Calu3 (cell line): ENCODE measurements at regions of chr14 and their contacts with region 1.

Region 1: GRCh38 chr14:69483765-69484443 is 624 bp upstream of the PLEKHD1 start:
- DNase-seq: peak; percentile 35
- H3K4me3 Mint-ChIP-seq: peak overlapping the region; percentile 72
- H3K27ac Mint-ChIP-seq: no peak overlapping the region
- H3K4me1 Mint-ChIP-seq: no peaks in the 10 kb centered on the region
- H3K27me3 Mint-ChIP-seq: peaks cover 65% of the 10 kb centered on the region
- CTCF ChIP-seq: no peak

Region 2: GRCh38 chr14:67987606-67988005 is 1496.3 kb before region 1 on chr14:
- CTCF ChIA-PET with region 1: interaction called, 12 read pairs
- intact Hi-C with region 1: no loop called
- DNase-seq: no peak
- H3K4me3 Mint-ChIP-seq: no peak overlapping the region
- H3K27ac Mint-ChIP-seq: no peak overlapping the region
- H3K4me1 Mint-ChIP-seq: no peaks in the 10 kb centered on the region
- H3K27me3 Mint-ChIP-seq: no peaks in the 10 kb centered on the region
- CTCF ChIP-seq: no peak

Region 3: GRCh38 chr14:69780952-69781351 is 297.0 kb after region 1 on chr14:
- CTCF ChIA-PET with region 1: no interaction called
- intact Hi-C with region 1: no loop called
- DNase-seq: no peak
- H3K4me3 Mint-ChIP-seq: no peak overlapping the region
- H3K27ac Mint-ChIP-seq: no peak overlapping the region
- H3K4me1 Mint-ChIP-seq: no peaks in the 10 kb centered on the region
- H3K27me3 Mint-ChIP-seq: no peaks in the 10 kb centered on the region
- CTCF ChIP-seq: no peak